Mammary epithelial cell (primary cell): ENCODE measurements at regions of chr18 and their contacts with region 1.

Region 1: DNA sequence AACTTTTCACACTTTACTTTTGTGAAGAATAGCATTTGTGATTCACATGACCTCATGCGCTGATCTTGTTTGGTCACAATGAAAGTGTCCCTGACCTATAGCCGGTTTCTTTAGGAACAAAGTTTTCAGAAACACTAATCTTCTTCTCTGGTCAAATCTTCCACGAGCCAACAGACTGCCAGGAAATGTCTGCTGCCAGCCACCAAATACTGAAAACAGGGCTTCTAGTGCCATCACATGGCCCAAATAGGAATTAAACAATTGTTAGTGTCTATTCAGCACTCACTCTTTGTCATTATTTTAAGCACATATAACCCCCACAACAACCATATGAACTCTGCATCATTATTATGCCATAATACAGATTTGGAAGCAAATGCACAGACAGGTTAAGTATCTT is 286.5 kb upstream of the SYT4 start:
- DNase-seq: peak; percentile 30
- H3K4me3 ChIP-seq: no peak overlapping the region
- H3K27ac ChIP-seq: no peak overlapping the region
- H3K4me1 ChIP-seq: no peaks in the 10 kb centered on the region
- H3K27me3 ChIP-seq: no peaks in the 10 kb centered on the region
- CTCF ChIP-seq: peak; percentile 59 to 64

Region 2: GRCh38 chr18:43277164-43277600 is 286.6 kb before region 1 on chr18 and contains the start of gene SYT4:
- CTCF ChIA-PET with region 1: no interaction called
- dilution Hi-C with region 1: no loop called
- in situ Hi-C with region 1: loop called in 1 of 2 experiments (anchors 25 kb)
- intact Hi-C with region 1: loop called (anchors 1 kb)
- DNase-seq: peak; percentile 42
- H3K4me3 ChIP-seq: no peak within 1 kb of the TSS
- H3K27ac ChIP-seq: no peak within 1 kb of the TSS
- H3K4me1 ChIP-seq: no peaks in the 10 kb centered on the region
- H3K27me3 ChIP-seq: peaks cover 5% of the 10 kb centered on the region
- CTCF ChIP-seq: no peak
- total RNA-seq, gene SYT4: not detected

Region 3: GRCh38 chr18:43396266-43396665 is 167.5 kb before region 1 on chr18:
- CTCF ChIA-PET with region 1: no interaction called
- dilution Hi-C with region 1: no loop called
- in situ Hi-C with region 1: loop called (anchors 25 kb)
- intact Hi-C with region 1: loop called (anchors 5 kb)
- DNase-seq: no peak
- H3K4me3 ChIP-seq: no peak overlapping the region
- H3K27ac ChIP-seq: no peak overlapping the region
- H3K4me1 ChIP-seq: peaks cover 6% of the 10 kb centered on the region
- H3K27me3 ChIP-seq: peaks cover 3% of the 10 kb centered on the region
- CTCF ChIP-seq: peak; percentile 53 to 62

Region 4: GRCh38 chr18:43422518-43422917 is 141.3 kb before region 1 on chr18:
- CTCF ChIA-PET with region 1: no interaction called
- dilution Hi-C with region 1: no loop called
- in situ Hi-C with region 1: loop called (anchors 25 kb)
- intact Hi-C with region 1: loop called (anchors 5 kb)
- DNase-seq: no peak
- H3K4me3 ChIP-seq: no peak overlapping the region
- H3K27ac ChIP-seq: no peak overlapping the region
- H3K4me1 ChIP-seq: no peaks in the 10 kb centered on the region
- H3K27me3 ChIP-seq: peaks cover 4% of the 10 kb centered on the region
- CTCF ChIP-seq: peak; percentile 15 to 50

Region 5: GRCh38 chr18:43442571-43442970 is 121.2 kb before region 1 on chr18:
- CTCF ChIA-PET with region 1: no interaction called
- dilution Hi-C with region 1: no loop called
- in situ Hi-C with region 1: no loop called
- intact Hi-C with region 1: no loop called
- DNase-seq: peak; percentile 26
- H3K4me3 ChIP-seq: no peak overlapping the region
- H3K27ac ChIP-seq: no peak overlapping the region
- H3K4me1 ChIP-seq: no peaks in the 10 kb centered on the region
- H3K27me3 ChIP-seq: no peaks in the 10 kb centered on the region
- CTCF ChIP-seq: no peak

Region 6: GRCh38 chr18:43515481-43515880 is 48.3 kb before region 1 on chr18:
- CTCF ChIA-PET with region 1: no interaction called
- dilution Hi-C with region 1: no loop called
- in situ Hi-C with region 1: no loop called
- intact Hi-C with region 1: loop called (anchors 1 kb)
- DNase-seq: no peak
- H3K4me3 ChIP-seq: no peak overlapping the region
- H3K27ac ChIP-seq: no peak overlapping the region
- H3K4me1 ChIP-seq: peaks cover 3% of the 10 kb centered on the region
- H3K27me3 ChIP-seq: no peaks in the 10 kb centered on the region
- CTCF ChIP-seq: no peak

Region 7: GRCh38 chr18:43760010-43760409 is 196.2 kb after region 1 on chr18:
- CTCF ChIA-PET with region 1: no interaction called
- dilution Hi-C with region 1: no loop called
- in situ Hi-C with region 1: no loop called
- intact Hi-C with region 1: no loop called
- DNase-seq: no peak
- H3K4me3 ChIP-seq: no peak overlapping the region
- H3K27ac ChIP-seq: no peak overlapping the region
- H3K4me1 ChIP-seq: no peaks in the 10 kb centered on the region
- H3K27me3 ChIP-seq: no peaks in the 10 kb centered on the region
- CTCF ChIP-seq: no peak